Gastrocnemius medialis (tissue), 4 donors: ENCODE measurements at regions of chr20 and their contacts with region 1.

Region 1: GRCh38 chr20:32789896-32790750 is 27.9 kb downstream of the DNMT3B start:
- DNase-seq: peak; percentile 39 to 54
- ATAC-seq: peak; percentile 75 to 88
- H3K4me3 ChIP-seq: no peak overlapping the region
- H3K27ac ChIP-seq: no peak overlapping the region
- H3K4me1 ChIP-seq: peaks cover 5 to 15% of the 10 kb centered on the region in 2 donors
- H3K27me3 ChIP-seq: no peaks in the 10 kb centered on the region
- CTCF ChIP-seq: peak; percentile 64 to 98 (median 88)
- POLR2A ChIP-seq: no peak

Region 2: GRCh38 chr20:32541323-32542258 is 248.5 kb before region 1 on chr20:
- in situ Hi-C with region 1: no loop called
- intact Hi-C with region 1: no loop called
- DNase-seq: no peak
- ATAC-seq: no peak
- H3K4me3 ChIP-seq: no peak overlapping the region
- H3K27ac ChIP-seq: no peak overlapping the region
- H3K4me1 ChIP-seq: no peaks in the 10 kb centered on the region
- H3K27me3 ChIP-seq: no peaks in the 10 kb centered on the region
- CTCF ChIP-seq: no peak
- POLR2A ChIP-seq: no peak

Region 3: GRCh38 chr20:32945710-32946221 is 155.6 kb after region 1 on chr20:
- in situ Hi-C with region 1: no loop called
- intact Hi-C with region 1: loop called (anchors 5 kb)
- DNase-seq: no peak
- ATAC-seq: no peak
- H3K4me3 ChIP-seq: no peak overlapping the region
- H3K27ac ChIP-seq: no peak overlapping the region
- H3K4me1 ChIP-seq: no peaks in the 10 kb centered on the region
- H3K27me3 ChIP-seq: peaks cover 0 to 20% (median 12%) of the 10 kb centered on the region in 3 donors
- CTCF ChIP-seq: peak in 1 of 5 experiments; percentile 35
- POLR2A ChIP-seq: no peak

Region 4: DNA sequence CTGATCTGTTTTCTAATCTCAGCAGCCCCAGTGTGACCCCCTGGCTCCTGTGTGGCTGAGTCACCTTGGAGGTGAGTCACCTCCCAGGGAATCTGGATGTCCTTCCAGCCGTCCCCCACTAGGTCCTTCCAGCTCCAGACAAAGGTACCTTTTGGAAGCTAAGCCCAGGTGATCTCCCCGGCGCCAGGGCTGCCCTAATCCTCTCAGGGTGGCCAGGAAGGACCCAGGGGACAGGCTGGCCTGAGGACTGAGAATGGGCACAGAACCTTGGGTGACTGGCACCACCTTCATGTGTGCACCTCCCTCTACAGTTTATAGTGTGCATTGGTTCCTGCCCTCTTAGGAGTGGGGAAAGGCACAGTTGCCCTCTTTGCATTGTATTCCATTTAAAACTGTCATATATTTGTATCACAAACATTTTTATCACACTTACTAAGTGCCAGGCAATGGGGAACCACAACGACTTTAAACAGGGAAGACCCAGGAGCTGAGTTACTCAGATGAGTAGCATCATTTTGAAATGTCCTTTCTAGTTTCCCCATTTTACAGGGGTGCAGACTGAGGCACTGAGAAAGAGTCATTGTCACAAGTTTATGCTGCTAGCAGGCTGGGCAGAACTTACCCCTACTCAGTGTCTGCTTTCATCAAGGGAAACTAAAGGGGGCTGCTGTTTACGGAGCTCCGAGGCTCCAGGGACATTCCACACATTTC is 286.7 kb after region 1 on chr20:
- in situ Hi-C with region 1: no loop called
- intact Hi-C with region 1: no loop called
- DNase-seq: no peak
- ATAC-seq: no peak
- H3K4me3 ChIP-seq: no peak overlapping the region
- H3K27ac ChIP-seq: no peak overlapping the region
- H3K4me1 ChIP-seq: no peaks in the 10 kb centered on the region
- H3K27me3 ChIP-seq: peaks cover 0 to 15% (median 5%) of the 10 kb centered on the region in 3 donors
- CTCF ChIP-seq: no peak
- POLR2A ChIP-seq: no peak